Endothelial cell of umbilical vein (primary cell): ENCODE measurements at regions of chr19 and their contacts with region 1.

Region 1: DNA sequence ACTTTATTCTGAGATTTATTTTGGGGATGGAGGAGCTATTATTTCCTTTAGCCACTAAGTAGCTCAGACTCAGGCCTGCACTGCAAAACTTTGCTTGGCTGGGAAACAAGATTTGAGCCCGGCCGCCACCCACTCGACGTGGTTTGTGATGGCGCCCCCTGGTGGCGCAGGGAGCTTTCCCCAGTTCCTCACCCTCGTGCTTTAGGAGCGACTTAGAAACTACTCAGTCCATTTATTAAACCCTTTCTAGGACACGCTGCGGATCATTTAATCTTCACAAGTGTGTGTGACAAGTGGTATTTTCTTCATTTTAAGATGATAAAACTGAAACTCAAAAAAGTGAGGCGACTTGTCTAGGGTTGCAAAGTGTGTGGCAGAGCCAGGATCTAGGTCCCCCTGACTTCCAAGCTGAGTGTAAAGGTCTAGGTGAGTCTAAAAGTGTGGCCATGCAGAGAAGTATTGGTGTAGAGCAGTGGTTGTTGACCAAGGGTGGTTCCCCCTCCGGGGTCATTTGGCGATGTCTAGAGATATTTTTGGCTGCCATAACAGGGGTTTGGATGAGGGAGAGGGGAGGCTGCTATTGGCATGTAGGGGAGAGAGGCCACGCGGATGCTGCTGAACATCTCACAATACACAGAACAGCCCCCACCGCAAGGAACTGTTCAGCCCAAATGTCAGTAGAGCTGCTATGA is 2.2 kb downstream of the CXCL17 start:
- DNase-seq: peak; percentile 63
- H3K4me3 ChIP-seq: no peak overlapping the region
- H3K27ac ChIP-seq: no peak overlapping the region
- H3K4me1 ChIP-seq: no peaks in the 10 kb centered on the region
- H3K27me3 ChIP-seq: peaks cover 10 to 14% of the 10 kb centered on the region in 2 experiments
- CTCF ChIP-seq: peak; percentile 94
- POLR2A ChIP-seq: no peak

Region 2: GRCh38 chr19:42423462-42424344 is 16.8 kb before region 1 on chr19:
- CTCF ChIA-PET with region 1: interaction called, 28 read pairs
- POLR2A ChIA-PET with region 1: no interaction called
- dilution Hi-C with region 1: no loop called
- intact Hi-C with region 1: loop called (anchors 2 kb)
- DNase-seq: peak; percentile 88
- H3K4me3 ChIP-seq: peak overlapping the region; percentile 25 to 52 (median 49)
- H3K27ac ChIP-seq: peak overlapping the region; percentile 55
- H3K4me1 ChIP-seq: peaks cover 29% of the 10 kb centered on the region
- H3K27me3 ChIP-seq: no peaks in the 10 kb centered on the region
- CTCF ChIP-seq: no peak
- POLR2A ChIP-seq: no peak

Region 3: DNA sequence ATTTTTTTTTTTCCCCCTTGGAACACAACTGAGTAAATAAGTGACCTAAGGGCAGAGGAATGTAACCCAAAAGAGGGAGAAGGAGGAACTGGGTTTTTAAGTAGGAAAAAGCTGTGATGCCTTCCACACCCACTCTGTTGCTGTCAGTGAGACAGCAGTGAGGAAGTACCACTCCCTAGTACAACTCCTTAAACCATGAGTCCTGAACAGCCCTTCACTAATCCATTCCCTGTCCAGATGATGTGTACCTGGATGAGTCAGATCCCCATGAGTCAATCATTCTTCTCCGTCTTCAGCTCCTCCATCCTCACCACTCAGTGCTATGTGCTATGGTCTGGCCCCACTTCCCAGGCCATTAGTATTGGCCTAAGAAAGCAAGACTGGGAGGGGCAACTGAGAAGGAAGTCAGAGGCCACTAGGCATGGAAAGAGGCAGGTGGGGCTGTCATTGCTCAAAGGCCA is 15.1 kb after region 1 on chr19:
- CTCF ChIA-PET with region 1: interaction called, 38 read pairs
- POLR2A ChIA-PET with region 1: no interaction called
- dilution Hi-C with region 1: no loop called
- intact Hi-C with region 1: no loop called
- DNase-seq: no peak
- H3K4me3 ChIP-seq: no peak overlapping the region
- H3K27ac ChIP-seq: no peak overlapping the region
- H3K4me1 ChIP-seq: no peaks in the 10 kb centered on the region
- H3K27me3 ChIP-seq: peaks cover 7 to 14% of the 10 kb centered on the region in 2 experiments
- CTCF ChIP-seq: no peak
- POLR2A ChIP-seq: no peak

Region 4: GRCh38 chr19:42465827-42466280 is 25.4 kb after region 1 on chr19:
- CTCF ChIA-PET with region 1: interaction called, 10 read pairs
- POLR2A ChIA-PET with region 1: no interaction called
- dilution Hi-C with region 1: no loop called
- intact Hi-C with region 1: no loop called
- DNase-seq: no peak
- H3K4me3 ChIP-seq: no peak overlapping the region
- H3K27ac ChIP-seq: no peak overlapping the region
- H3K4me1 ChIP-seq: no peaks in the 10 kb centered on the region
- H3K27me3 ChIP-seq: no peaks in the 10 kb centered on the region
- CTCF ChIP-seq: no peak
- POLR2A ChIP-seq: no peak

Region 5: DNA sequence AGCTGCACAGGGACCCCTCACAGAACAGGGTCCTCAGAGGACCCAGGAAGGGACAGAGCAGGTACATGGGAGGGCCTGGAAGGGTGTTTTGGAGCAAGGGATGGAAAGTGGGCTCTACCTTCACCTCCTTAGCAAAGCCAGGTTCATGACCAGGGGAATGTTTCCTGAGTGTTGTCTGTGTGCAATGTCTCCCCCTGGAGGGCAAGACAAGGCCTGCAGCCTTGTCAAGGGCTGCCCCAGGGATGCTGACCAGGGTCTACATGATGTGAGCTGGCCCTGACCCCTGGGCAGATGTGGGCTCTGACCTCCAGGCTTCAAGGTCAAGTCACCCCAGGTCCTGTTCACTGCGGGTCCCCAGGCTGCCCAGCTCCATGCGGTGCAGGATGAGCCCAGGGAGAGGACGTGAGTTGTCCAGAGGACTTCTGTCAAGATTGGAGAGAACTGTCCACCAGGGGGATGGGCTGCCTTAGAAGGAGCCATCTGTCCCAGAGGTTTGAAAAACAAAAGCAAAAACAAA is 88.8 kb after region 1 on chr19:
- CTCF ChIA-PET with region 1: interaction called, 24 read pairs
- POLR2A ChIA-PET with region 1: no interaction called
- dilution Hi-C with region 1: no loop called
- intact Hi-C with region 1: no loop called
- DNase-seq: peak; percentile 57
- H3K4me3 ChIP-seq: no peak overlapping the region
- H3K27ac ChIP-seq: no peak overlapping the region
- H3K4me1 ChIP-seq: peaks cover 8% of the 10 kb centered on the region
- H3K27me3 ChIP-seq: no peaks in the 10 kb centered on the region
- CTCF ChIP-seq: peak; percentile 93
- POLR2A ChIP-seq: no peak